ENCODE measurements at regions of chr6 and their contacts with region 1.

Region 1: DNA sequence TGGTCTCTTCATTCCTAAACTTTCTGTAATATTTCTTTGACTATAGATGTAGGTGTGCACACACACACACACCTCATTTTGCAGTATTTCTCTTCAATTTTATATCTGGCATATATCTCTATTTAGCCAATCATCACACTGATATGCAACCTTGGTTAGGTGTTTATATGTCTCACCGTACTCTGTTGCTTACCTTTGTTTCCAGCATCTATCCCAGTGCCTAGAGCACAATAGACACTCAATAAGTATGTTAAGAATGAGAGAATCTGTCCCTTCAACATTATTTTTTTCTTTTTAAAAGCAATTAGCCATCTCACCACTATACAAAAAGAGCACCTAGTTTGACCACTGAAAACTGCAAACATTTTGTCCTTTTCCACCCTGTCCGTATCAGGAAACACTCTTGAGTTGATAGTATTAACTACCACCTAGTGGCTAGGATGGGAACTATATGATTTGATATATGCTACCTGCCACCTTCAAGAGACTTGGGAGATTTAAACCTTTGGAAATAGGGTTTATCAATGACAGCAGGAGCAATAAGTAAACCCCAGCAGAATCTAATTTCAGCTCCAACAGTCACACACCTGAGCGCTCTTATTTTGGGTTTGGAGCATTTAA is 48.7 kb upstream of the RSPO3 start:
- DNase-seq: peak; percentile 52
- H3K4me3 ChIP-seq: no peak overlapping the region
- H3K27ac ChIP-seq: no peak overlapping the region
- H3K4me1 ChIP-seq: no peaks in the 10 kb centered on the region
- H3K27me3 ChIP-seq: no peaks in the 10 kb centered on the region
- CTCF ChIP-seq: peak; percentile 62

Region 2: GRCh38 chr6:126804332-126805064 is 265.3 kb before region 1 on chr6:
- CTCF ChIA-PET with region 1: no interaction called
- POLR2A ChIA-PET with region 1: no interaction called
- intact Hi-C with region 1: loop called (anchors 5 kb)
- DNase-seq: peak; percentile 78
- H3K4me3 ChIP-seq: no peak overlapping the region
- H3K27ac ChIP-seq: no peak overlapping the region
- H3K4me1 ChIP-seq: no peaks in the 10 kb centered on the region
- H3K27me3 ChIP-seq: no peaks in the 10 kb centered on the region
- CTCF ChIP-seq: peak; percentile 83